Vagina (tissue), 2 donors: ENCODE measurements at regions of chr13 and their contacts with region 1.

Region 1: GRCh38 chr13:101896541-101896940 is 444.1 kb downstream of the ITGBL1 start:
- DNase-seq: no peak
- H3K4me3 ChIP-seq: no peak overlapping the region
- H3K27ac ChIP-seq: no peak overlapping the region
- H3K4me1 ChIP-seq: no peaks in the 10 kb centered on the region
- H3K27me3 ChIP-seq: no peaks in the 10 kb centered on the region
- CTCF ChIP-seq: no peak
- POLR2A ChIP-seq: no peak

Region 2: DNA sequence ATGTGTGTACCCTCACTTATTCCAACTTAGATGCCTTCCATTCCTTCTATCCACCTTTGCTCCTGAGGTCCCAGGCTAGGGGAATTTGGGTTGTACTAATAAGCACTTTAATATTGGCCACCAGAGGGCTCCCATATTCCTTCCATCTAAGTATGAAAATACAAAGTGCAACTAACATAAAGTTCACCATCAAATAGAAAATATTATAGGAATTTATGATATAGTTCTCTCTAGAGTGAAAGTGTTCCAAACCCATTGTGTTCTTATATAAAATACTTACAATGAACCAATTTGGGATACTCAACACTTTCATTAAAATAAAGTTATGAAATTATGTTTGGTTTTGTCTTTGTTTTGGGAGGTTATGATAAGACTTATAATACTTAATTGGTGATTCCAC is 381.8 kb before region 1 on chr13:
- intact Hi-C with region 1: no loop called
- DNase-seq: no peak
- H3K4me3 ChIP-seq: no peak overlapping the region
- H3K27ac ChIP-seq: no peak overlapping the region
- H3K4me1 ChIP-seq: no peaks in the 10 kb centered on the region
- H3K27me3 ChIP-seq: no peaks in the 10 kb centered on the region
- CTCF ChIP-seq: peak in 2 of 3 experiments; percentile 38 to 58
- POLR2A ChIP-seq: no peak

Region 3: GRCh38 chr13:101673360-101674105 is 223.0 kb before region 1 on chr13:
- intact Hi-C with region 1: no loop called
- DNase-seq: no peak
- H3K4me3 ChIP-seq: no peak overlapping the region
- H3K27ac ChIP-seq: no peak overlapping the region
- H3K4me1 ChIP-seq: no peaks in the 10 kb centered on the region
- H3K27me3 ChIP-seq: no peaks in the 10 kb centered on the region
- CTCF ChIP-seq: no peak
- POLR2A ChIP-seq: no peak

Region 4: GRCh38 chr13:102020611-102021216 is 124.2 kb after region 1 on chr13:
- intact Hi-C with region 1: loop called (anchors 5 kb)
- DNase-seq: no peak
- H3K4me3 ChIP-seq: no peak overlapping the region
- H3K27ac ChIP-seq: no peak overlapping the region
- H3K4me1 ChIP-seq: no peaks in the 10 kb centered on the region
- H3K27me3 ChIP-seq: no peaks in the 10 kb centered on the region
- CTCF ChIP-seq: no peak
- POLR2A ChIP-seq: no peak